Kidney (tissue), 22 donors: ENCODE measurements at regions of chr9 and their contacts with region 1.

Region 1: DNA sequence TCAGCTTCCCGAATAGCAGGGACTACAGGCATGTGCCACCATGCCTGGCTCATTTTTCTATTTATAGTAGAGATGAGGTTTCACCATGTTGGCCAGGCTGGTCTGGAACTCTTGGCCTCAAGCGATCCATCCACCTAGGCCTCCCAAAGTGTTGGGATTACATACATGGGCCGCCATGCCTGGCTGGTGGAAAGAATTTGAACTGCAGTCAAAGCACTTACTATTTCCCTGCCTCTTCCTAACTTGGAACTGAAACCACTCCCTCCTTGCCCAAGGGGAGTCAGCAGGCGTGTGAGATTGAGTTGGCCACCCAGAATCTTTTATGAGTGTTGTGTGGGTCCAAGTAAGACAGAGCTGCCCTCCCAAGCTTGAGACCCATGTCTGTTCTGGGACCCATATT is 86.1 kb upstream of the PTPN3 start:
- DNase-seq: no peak
- H3K4me3 ChIP-seq: no peak overlapping the region
- H3K27ac ChIP-seq: no peak overlapping the region
- H3K4me1 ChIP-seq: no peaks in the 10 kb centered on the region
- H3K27me3 ChIP-seq: no peaks in the 10 kb centered on the region
- CTCF ChIP-seq: no peak

Region 2: DNA sequence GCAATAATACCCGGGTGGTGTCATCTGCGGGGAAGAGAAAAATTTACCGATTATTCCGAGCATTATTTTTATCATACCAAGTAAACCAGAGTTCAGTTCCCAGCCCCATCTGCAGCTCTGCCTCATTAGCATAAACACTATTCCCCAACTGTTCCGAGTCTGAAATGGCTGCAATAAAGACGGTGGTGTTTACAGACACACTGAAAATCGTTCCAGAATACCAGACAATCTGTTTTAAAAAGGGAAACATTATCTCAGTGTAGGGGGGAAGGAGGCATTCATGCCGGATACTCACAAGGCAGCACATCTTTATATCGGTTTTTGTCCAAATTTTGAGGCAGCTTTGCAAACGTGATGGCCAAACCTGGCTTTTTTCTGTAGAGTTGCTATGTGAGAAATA is 193.0 kb before region 1 on chr9:
- intact Hi-C with region 1: no loop called
- DNase-seq: no peak
- H3K4me3 ChIP-seq: no peak overlapping the region
- H3K27ac ChIP-seq: no peak overlapping the region
- H3K4me1 ChIP-seq: no peaks in the 10 kb centered on the region
- H3K27me3 ChIP-seq: no peaks in the 10 kb centered on the region
- CTCF ChIP-seq: no peak

Region 3: GRCh38 chr9:109639674-109640579 is 55.7 kb after region 1 on chr9:
- intact Hi-C with region 1: loop called (anchors 10 kb)
- DNase-seq: peak; percentile 44 to 86 (median 64)
- H3K4me3 ChIP-seq: peak overlapping the region in 2 of 3 donors; percentile 23 to 51
- H3K27ac ChIP-seq: no peak overlapping the region
- H3K4me1 ChIP-seq: peaks cover 0 to 8% (median 0%) of the 10 kb centered on the region in 3 donors
- H3K27me3 ChIP-seq: peaks cover 3% of the 10 kb centered on the region
- CTCF ChIP-seq: no peak